IMR-90 (cell line): ENCODE measurements at regions of chr2 and their contacts with region 1.

Region 1: GRCh38 chr2:222860740-222861410 is at the start of gene ACSL3:
- DNase-seq: peak; percentile 89
- ATAC-seq: peak; percentile 97
- H3K4me3 ChIP-seq: peak within 1 kb of the TSS; percentile 98
- H3K27ac ChIP-seq: peak within 1 kb of the TSS; percentile 94
- H3K4me1 ChIP-seq: peaks cover 10% of the 10 kb centered on the region
- H3K27me3 ChIP-seq: no peaks in the 10 kb centered on the region
- CTCF ChIP-seq: 0 out of 2 replicates have a peak, but pooled peaks have one; percentile 7
- POLR2A ChIP-seq: peak; percentile 98
- RAD21 ChIP-seq: no peak; the same call in 1 of the 2 replicates
- total RNA-seq, gene ACSL3: 84.2 and 96.4 TPM in 2 replicates

Region 2: GRCh38 chr2:222690564-222691200 is 170.2 kb before region 1 on chr2:
- CTCF ChIA-PET with region 1: interaction called, 10 read pairs
- POLR2A ChIA-PET with region 1: no interaction called
- dilution Hi-C with region 1: no loop called
- in situ Hi-C with region 1: no loop called
- intact Hi-C with region 1: loop called (anchors 5 kb)
- DNase-seq: peak; percentile 78
- ATAC-seq: peak; percentile 92
- H3K4me3 ChIP-seq: no peak overlapping the region
- H3K27ac ChIP-seq: no peak overlapping the region
- H3K4me1 ChIP-seq: no peaks in the 10 kb centered on the region
- H3K27me3 ChIP-seq: no peaks in the 10 kb centered on the region; the same call in 1 of the 2 replicates
- CTCF ChIP-seq: peak; percentile 100
- POLR2A ChIP-seq: no peak
- RAD21 ChIP-seq: peak; percentile 85

Region 3: GRCh38 chr2:222707689-222708525 is 153.0 kb before region 1 on chr2:
- CTCF ChIA-PET with region 1: interaction called, 15 read pairs
- POLR2A ChIA-PET with region 1: interaction called, 8 read pairs
- dilution Hi-C with region 1: no loop called
- in situ Hi-C with region 1: loop called (anchors 5 kb)
- intact Hi-C with region 1: loop called (anchors 1 kb)
- DNase-seq: peak; percentile 87
- ATAC-seq: peak; percentile 18
- H3K4me3 ChIP-seq: no peak overlapping the region
- H3K27ac ChIP-seq: no peak overlapping the region
- H3K4me1 ChIP-seq: peaks cover 11% of the 10 kb centered on the region
- H3K27me3 ChIP-seq: no peaks in the 10 kb centered on the region
- CTCF ChIP-seq: peak; percentile 81
- POLR2A ChIP-seq: no peak
- RAD21 ChIP-seq: peak; percentile 76

Region 4: GRCh38 chr2:222844323-222844722 is 16.6 kb before region 1 on chr2:
- CTCF ChIA-PET with region 1: interaction called, 6 read pairs
- POLR2A ChIA-PET with region 1: interaction called, 3 read pairs
- dilution Hi-C with region 1: no loop called
- in situ Hi-C with region 1: no loop called
- intact Hi-C with region 1: loop called (anchors 1 kb)
- DNase-seq: peak; percentile 96
- ATAC-seq: peak; percentile 85
- H3K4me3 ChIP-seq: no peak overlapping the region
- H3K27ac ChIP-seq: peak overlapping the region; percentile 92
- H3K4me1 ChIP-seq: peaks cover 5% of the 10 kb centered on the region
- H3K27me3 ChIP-seq: no peaks in the 10 kb centered on the region
- CTCF ChIP-seq: no peak
- POLR2A ChIP-seq: no peak
- RAD21 ChIP-seq: 0 out of 2 replicates have a peak, but pooled peaks have one; percentile 10

Region 5: GRCh38 chr2:222878877-222879603 is 18.2 kb after region 1 on chr2:
- CTCF ChIA-PET with region 1: interaction called, 3 read pairs
- POLR2A ChIA-PET with region 1: no interaction called
- dilution Hi-C with region 1: no loop called
- in situ Hi-C with region 1: no loop called
- intact Hi-C with region 1: loop called (anchors 2 kb)
- DNase-seq: peak; percentile 84
- ATAC-seq: peak; percentile 90
- H3K4me3 ChIP-seq: no peak overlapping the region
- H3K27ac ChIP-seq: no peak overlapping the region
- H3K4me1 ChIP-seq: peaks cover 7% of the 10 kb centered on the region
- H3K27me3 ChIP-seq: no peaks in the 10 kb centered on the region
- CTCF ChIP-seq: no peak
- POLR2A ChIP-seq: no peak
- RAD21 ChIP-seq: no peak

Region 6: GRCh38 chr2:222903234-222904220 is 42.7 kb after region 1 on chr2:
- CTCF ChIA-PET with region 1: interaction called, 5 read pairs
- POLR2A ChIA-PET with region 1: interaction called, 3 read pairs
- dilution Hi-C with region 1: no loop called
- in situ Hi-C with region 1: no loop called
- intact Hi-C with region 1: loop called (anchors 1 kb)
- DNase-seq: peak; percentile 73
- ATAC-seq: peak; percentile 24; the same call in 1 of the 2 replicates
- H3K4me3 ChIP-seq: no peak overlapping the region
- H3K27ac ChIP-seq: peak overlapping the region; percentile 80; the same call in 1 of the 2 replicates
- H3K4me1 ChIP-seq: peaks cover 36% of the 10 kb centered on the region
- H3K27me3 ChIP-seq: no peaks in the 10 kb centered on the region
- CTCF ChIP-seq: peak; percentile 77
- POLR2A ChIP-seq: no peak
- RAD21 ChIP-seq: peak; percentile 79

Region 7: DNA sequence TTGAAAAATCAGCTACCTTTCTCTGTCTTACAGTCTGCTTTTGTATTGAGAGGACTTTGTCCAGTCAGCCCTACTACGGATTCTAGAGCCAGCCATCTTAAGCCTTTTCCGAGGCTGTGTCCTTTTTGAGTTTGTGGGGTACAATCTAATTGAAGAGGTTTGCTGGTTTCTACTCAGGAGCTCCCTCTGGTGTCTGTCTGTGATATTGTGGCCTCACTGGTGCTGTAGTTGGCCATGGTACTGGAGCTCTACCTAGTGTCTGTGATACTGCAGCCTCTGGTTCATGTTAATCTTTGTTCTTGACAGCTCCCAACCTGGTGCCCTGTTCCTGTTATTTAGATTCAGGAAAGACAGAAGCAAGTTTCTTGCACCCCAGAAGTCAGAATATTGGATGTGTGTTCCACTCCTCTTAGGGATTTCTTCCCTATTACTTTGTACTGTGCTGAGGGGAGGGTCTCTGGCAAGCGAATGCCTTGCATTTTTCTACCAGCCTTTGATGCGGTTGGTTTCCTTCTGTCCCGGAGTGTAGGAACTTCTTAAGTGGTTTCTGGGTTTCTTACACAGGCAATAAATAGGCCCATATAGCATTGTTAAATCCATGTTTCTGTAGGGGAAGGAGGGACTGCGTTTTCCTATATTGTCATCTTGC is 78.5 kb after region 1 on chr2:
- CTCF ChIA-PET with region 1: interaction called, 5 read pairs
- POLR2A ChIA-PET with region 1: no interaction called
- dilution Hi-C with region 1: no loop called
- in situ Hi-C with region 1: no loop called
- intact Hi-C with region 1: loop called (anchors 5 kb)
- DNase-seq: peak; percentile 68
- ATAC-seq: peak; percentile 88
- H3K4me3 ChIP-seq: no peak overlapping the region
- H3K27ac ChIP-seq: no peak overlapping the region
- H3K4me1 ChIP-seq: peaks cover 4% of the 10 kb centered on the region; the same call in 1 of the 2 replicates
- H3K27me3 ChIP-seq: no peaks in the 10 kb centered on the region
- CTCF ChIP-seq: peak; percentile 88
- POLR2A ChIP-seq: no peak
- RAD21 ChIP-seq: peak; percentile 74

Region 8: GRCh38 chr2:223815186-223815883 is 954.5 kb after region 1 on chr2:
- CTCF ChIA-PET with region 1: no interaction called
- POLR2A ChIA-PET with region 1: no interaction called
- dilution Hi-C with region 1: no loop called
- in situ Hi-C with region 1: no loop called
- intact Hi-C with region 1: no loop called
- DNase-seq: peak; percentile 92
- ATAC-seq: peak; percentile 76
- H3K4me3 ChIP-seq: no peak overlapping the region
- H3K27ac ChIP-seq: no peak overlapping the region
- H3K4me1 ChIP-seq: peaks cover 1% of the 10 kb centered on the region; the same call in 1 of the 2 replicates
- H3K27me3 ChIP-seq: no peaks in the 10 kb centered on the region; the same call in 1 of the 2 replicates
- CTCF ChIP-seq: no peak
- POLR2A ChIP-seq: no peak
- RAD21 ChIP-seq: no peak